ENCODE measurements at regions of chr15 and their contacts with region 1.

Region 1: GRCh38 chr15:28935326-28935725 is 49.6 kb downstream of the APBA2 start:
- DNase-seq: no peak
- H3K4me3 ChIP-seq: no peak overlapping the region
- H3K27ac ChIP-seq: no peak overlapping the region
- H3K4me1 ChIP-seq: no peaks in the 10 kb centered on the region
- H3K27me3 ChIP-seq: no peaks in the 10 kb centered on the region
- CTCF ChIP-seq: no peak
- EP300 ChIP-seq: no peak
- POLR2A ChIP-seq: no peak

Region 2: DNA sequence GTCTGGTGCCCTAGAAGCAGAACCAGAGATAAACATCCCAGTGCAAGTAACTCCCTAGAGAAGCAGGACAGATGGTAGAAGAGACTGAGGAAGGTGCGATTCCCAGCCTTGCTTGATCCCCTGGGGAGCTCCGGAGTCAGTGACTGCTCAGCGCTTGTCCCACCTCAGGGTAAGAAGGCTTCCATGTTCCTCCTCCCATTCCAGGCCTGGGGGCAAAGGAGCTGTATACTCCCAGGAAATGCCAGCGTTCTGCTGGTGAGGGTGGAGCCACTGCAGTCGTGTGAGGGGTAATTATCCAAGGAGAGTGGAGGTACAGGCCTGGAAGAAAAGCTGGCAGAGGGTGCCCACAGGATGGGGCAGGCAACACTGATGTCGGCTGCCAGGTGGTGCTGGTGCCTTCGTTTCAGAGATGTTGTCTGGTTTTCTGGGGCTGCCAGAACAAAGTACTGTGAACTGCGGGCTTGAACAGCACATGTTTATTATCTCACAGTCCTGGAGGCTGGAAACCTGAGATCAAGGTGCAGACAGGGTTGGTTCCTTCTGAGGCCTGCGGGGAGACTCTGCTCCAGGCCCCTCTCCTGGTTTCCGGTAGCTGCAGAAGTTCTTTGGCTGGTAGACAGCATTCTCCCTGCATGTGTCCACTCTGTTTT is 61.7 kb before region 1 on chr15:
- in situ Hi-C with region 1: no loop called
- intact Hi-C with region 1: loop called (anchors 10 kb)
- DNase-seq: no peak
- H3K4me3 ChIP-seq: no peak overlapping the region
- H3K27ac ChIP-seq: no peak overlapping the region
- H3K4me1 ChIP-seq: no peaks in the 10 kb centered on the region
- H3K27me3 ChIP-seq: no peaks in the 10 kb centered on the region
- CTCF ChIP-seq: no peak
- EP300 ChIP-seq: no peak
- POLR2A ChIP-seq: no peak

Region 3: DNA sequence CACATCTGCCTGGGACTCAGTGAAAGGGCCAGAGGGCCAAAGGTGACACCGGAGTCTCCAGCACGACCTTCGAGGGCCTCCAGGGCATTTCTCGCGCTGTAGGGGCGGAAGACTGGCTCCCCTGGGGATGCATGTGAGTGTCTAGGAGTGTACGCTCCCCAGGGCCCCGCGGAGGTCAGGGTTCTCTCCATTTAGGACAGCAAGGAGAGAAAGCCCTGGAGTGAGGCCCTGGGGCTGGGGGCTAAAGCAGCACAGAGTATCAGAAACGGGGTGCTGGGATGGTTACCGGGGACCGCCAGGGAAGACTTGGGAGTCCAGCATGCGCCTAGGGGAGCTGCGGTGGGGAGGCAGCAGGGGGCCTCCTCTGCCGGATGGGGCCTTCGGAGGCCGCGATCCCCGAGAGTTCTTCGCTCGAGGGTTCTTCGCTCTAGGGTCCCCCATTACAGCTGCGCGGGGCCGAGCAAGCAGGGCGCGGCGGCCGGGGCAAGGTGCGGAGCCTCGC is 50.1 kb before region 1 on chr15:
- in situ Hi-C with region 1: no loop called
- intact Hi-C with region 1: no loop called
- DNase-seq: no peak
- H3K4me3 ChIP-seq: peak overlapping the region in 3 of 4 donors; percentile 42 to 58 (median 48)
- H3K27ac ChIP-seq: no peak overlapping the region
- H3K4me1 ChIP-seq: peaks cover 0 to 12% (median 5%) of the 10 kb centered on the region in 4 donors
- H3K27me3 ChIP-seq: peaks cover 37% of the 10 kb centered on the region
- CTCF ChIP-seq: no peak
- EP300 ChIP-seq: no peak
- POLR2A ChIP-seq: no peak